MCF 10A (cell line): ENCODE measurements at regions of chr12 and their contacts with region 1.

Region 1: DNA sequence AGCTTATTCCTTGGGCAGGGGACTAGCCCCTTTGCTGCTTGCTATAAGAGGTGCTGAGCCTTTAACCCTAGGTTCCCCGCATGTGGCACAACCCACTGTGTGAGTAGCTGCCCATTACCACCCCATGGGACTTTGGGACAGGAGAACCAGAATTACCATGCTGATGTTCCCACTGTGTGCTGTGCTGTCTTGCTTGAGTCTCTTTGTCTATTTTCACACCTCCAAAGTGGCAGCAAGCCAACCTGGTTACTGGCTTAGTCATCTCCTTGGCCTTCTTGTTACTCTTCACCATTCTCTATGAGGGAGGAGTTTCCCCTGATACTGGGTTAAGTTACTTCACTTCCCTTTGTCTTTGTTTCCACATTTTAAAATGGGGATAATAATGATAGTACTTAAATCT is 73.4 kb upstream of the ETV6 start:
- DNase-seq: peak; percentile 99
- H3K4me3 Mint-ChIP-seq: no peak overlapping the region
- H3K27ac Mint-ChIP-seq: no peak overlapping the region
- H3K4me1 Mint-ChIP-seq: peaks cover 38% of the 10 kb centered on the region
- H3K27me3 Mint-ChIP-seq: no peaks in the 10 kb centered on the region
- CTCF ChIP-seq: no peak

Region 2: GRCh38 chr12:11553871-11554533 is 22.1 kb before region 1 on chr12:
- CTCF ChIA-PET with region 1: interaction called, 29 read pairs
- POLR2A ChIA-PET with region 1: interaction called, 3 read pairs
- intact Hi-C with region 1: loop called (anchors 1 kb)
- DNase-seq: peak; percentile 78
- H3K4me3 Mint-ChIP-seq: no peak overlapping the region
- H3K27ac Mint-ChIP-seq: no peak overlapping the region
- H3K4me1 Mint-ChIP-seq: peaks cover 11% of the 10 kb centered on the region
- H3K27me3 Mint-ChIP-seq: peaks cover 57% of the 10 kb centered on the region
- CTCF ChIP-seq: peak; percentile 59